ENCODE measurements at regions of chr10 and their contacts with region 1.

Region 1: DNA sequence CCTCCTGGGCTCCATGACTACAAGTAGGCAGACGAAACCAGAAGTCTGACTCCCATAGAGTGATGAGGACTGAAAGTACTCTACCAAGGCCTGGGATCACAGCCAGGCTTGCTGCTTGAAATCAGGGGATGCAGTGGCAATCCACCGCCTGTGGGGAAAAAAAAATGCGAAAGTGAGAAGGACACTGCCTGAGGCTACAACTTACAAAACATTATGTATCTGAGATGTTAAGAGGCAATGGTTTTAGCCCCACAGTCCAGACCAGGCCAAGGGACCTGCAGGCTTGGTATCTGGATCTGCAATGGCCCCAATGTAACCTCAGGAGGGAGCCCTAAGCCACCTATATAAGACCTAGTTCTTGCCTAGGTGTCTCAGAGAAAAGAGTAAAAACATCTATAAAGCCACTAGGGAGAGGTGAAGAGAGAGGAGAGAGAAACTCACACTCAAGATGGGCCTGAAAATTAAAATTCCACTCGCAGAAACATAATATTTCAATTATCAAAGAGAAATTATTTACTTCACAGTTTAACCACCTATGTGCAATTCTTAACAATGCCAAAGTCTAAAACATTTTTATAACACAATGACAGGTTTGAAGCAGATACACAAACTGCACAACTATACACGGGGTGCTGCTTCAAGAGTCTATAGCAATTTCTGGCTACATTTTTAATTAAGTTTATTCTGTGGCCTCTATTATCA is 13.9 kb downstream of the DNAJC1 start:
- DNase-seq: peak in 7 of 9 donors; percentile 14 to 52 (median 36)
- ATAC-seq: peak; percentile 89
- H3K4me3 ChIP-seq: no peak overlapping the region
- H3K4me3 Mint-ChIP-seq: no peak overlapping the region
- H3K27ac ChIP-seq: no peak overlapping the region
- H3K27ac Mint-ChIP-seq: peak overlapping the region in 2 of 9 donors; percentile 10 to 47
- H3K4me1 ChIP-seq: no peaks in the 10 kb centered on the region
- H3K4me1 Mint-ChIP-seq: peaks cover 0 to 14% (median 5%) of the 10 kb centered on the region in 7 donors
- H3K27me3 ChIP-seq: no peaks in the 10 kb centered on the region
- H3K27me3 Mint-ChIP-seq: no peaks in the 10 kb centered on the region

Region 2: GRCh38 chr10:22067099-22067498 is 77.5 kb after region 1 on chr10:
- CTCF ChIA-PET with region 1: no interaction called
- POLR2A ChIA-PET with region 1: no interaction called
- intact Hi-C with region 1: loop called in 1 of 2 experiments (anchors 1 kb)
- DNase-seq: no peak
- ATAC-seq: no peak
- H3K4me3 ChIP-seq: no peak overlapping the region
- H3K4me3 Mint-ChIP-seq: no peak overlapping the region
- H3K27ac ChIP-seq: no peak overlapping the region
- H3K27ac Mint-ChIP-seq: no peak overlapping the region
- H3K4me1 ChIP-seq: no peaks in the 10 kb centered on the region
- H3K4me1 Mint-ChIP-seq: no peaks in the 10 kb centered on the region
- H3K27me3 ChIP-seq: no peaks in the 10 kb centered on the region
- H3K27me3 Mint-ChIP-seq: peaks cover 0 to 8% (median 4%) of the 10 kb centered on the region in 5 donors

Region 3: DNA sequence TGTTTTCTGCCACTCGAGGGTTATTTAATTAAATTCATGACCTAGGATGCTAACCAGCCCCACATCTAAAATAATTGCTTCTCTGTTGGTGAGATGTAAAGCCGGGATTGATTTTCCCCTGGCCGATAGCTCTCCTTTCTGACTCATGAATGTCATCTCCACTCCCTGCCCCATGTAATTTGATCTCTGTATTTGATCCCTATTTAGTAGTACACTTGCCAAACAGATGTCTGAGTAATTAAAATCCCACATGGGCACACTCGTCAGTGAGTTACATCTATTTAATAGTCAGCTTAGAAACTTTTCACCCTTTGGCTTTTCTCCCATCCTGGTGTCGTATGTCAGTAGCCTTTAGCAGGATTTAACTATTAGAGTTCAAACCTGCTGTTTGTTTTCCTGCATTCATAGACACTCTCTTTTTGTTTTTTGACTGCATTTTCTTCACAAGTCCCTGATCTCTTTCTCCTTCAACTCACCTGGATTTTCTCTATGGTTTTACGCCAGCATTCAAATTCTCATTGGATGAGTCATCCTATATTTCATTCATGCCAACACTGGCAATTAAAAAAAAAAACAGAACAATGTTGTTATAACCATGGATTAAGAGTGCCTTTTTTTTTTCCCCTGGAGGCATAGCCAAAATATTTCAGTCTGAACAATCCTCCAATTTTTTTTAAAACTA is 438.4 kb after region 1 on chr10:
- CTCF ChIA-PET with region 1: interaction called, 11 read pairs
- POLR2A ChIA-PET with region 1: no interaction called
- intact Hi-C with region 1: no loop called
- DNase-seq: no peak
- ATAC-seq: no peak
- H3K4me3 ChIP-seq: no peak overlapping the region
- H3K4me3 Mint-ChIP-seq: no peak overlapping the region
- H3K27ac ChIP-seq: no peak overlapping the region
- H3K27ac Mint-ChIP-seq: no peak overlapping the region
- H3K4me1 ChIP-seq: no peaks in the 10 kb centered on the region
- H3K4me1 Mint-ChIP-seq: peaks cover 0 to 9% (median 0%) of the 10 kb centered on the region in 7 donors
- H3K27me3 ChIP-seq: no peaks in the 10 kb centered on the region
- H3K27me3 Mint-ChIP-seq: peaks cover 4 to 57% (median 17%) of the 10 kb centered on the region in 5 donors

Region 4: DNA sequence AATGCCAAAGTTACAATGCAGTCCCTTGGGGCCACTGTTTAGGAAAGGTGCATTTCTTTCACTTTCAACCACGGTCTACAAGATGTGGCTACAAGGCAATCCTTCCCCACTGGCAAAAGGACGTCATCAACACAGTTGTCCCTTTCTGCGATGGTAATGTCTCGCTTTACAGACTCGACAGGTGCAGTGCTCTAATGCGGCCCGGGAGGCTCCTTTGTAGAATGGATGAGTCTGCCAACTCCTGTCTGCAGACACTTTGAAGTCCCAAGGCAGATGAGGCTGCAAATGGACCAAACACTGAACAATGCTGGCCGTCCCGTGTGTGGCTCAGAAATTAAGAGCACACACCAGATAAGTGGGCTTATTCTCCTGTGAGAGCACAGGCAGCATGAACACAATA is 591.1 kb after region 1 on chr10:
- CTCF ChIA-PET with region 1: interaction called, 14 read pairs
- POLR2A ChIA-PET with region 1: no interaction called
- intact Hi-C with region 1: loop called (anchors 2 to 5 kb)
- DNase-seq: no peak
- ATAC-seq: no peak
- H3K4me3 ChIP-seq: no peak overlapping the region
- H3K4me3 Mint-ChIP-seq: no peak overlapping the region
- H3K27ac ChIP-seq: no peak overlapping the region
- H3K27ac Mint-ChIP-seq: peak overlapping the region in 5 of 9 donors; percentile 28 to 71 (median 46)
- H3K4me1 ChIP-seq: no peaks in the 10 kb centered on the region
- H3K4me1 Mint-ChIP-seq: peaks cover 21 to 72% (median 56%) of the 10 kb centered on the region in 7 donors
- H3K27me3 ChIP-seq: no peaks in the 10 kb centered on the region
- H3K27me3 Mint-ChIP-seq: no peaks in the 10 kb centered on the region

Region 5: GRCh38 chr10:23158370-23158769 is 1168.8 kb after region 1 on chr10:
- CTCF ChIA-PET with region 1: interaction called, 10 read pairs
- POLR2A ChIA-PET with region 1: no interaction called
- intact Hi-C with region 1: loop called in 1 of 2 experiments (anchors 1 kb)
- DNase-seq: peak in 7 of 9 donors; percentile 10 to 37 (median 30)
- ATAC-seq: peak; percentile 63
- H3K4me3 ChIP-seq: no peak overlapping the region
- H3K4me3 Mint-ChIP-seq: peak overlapping the region in 2 of 10 donors; percentile 24 to 30
- H3K27ac ChIP-seq: no peak overlapping the region
- H3K27ac Mint-ChIP-seq: no peak overlapping the region
- H3K4me1 ChIP-seq: no peaks in the 10 kb centered on the region
- H3K4me1 Mint-ChIP-seq: peaks cover 0 to 22% (median 0%) of the 10 kb centered on the region in 7 donors
- H3K27me3 ChIP-seq: no peaks in the 10 kb centered on the region
- H3K27me3 Mint-ChIP-seq: peaks cover 16 to 44% (median 34%) of the 10 kb centered on the region in 5 donors

Region 6: GRCh38 chr10:23702977-23703414 is 1713.4 kb after region 1 on chr10:
- CTCF ChIA-PET with region 1: no interaction called
- POLR2A ChIA-PET with region 1: no interaction called
- intact Hi-C with region 1: loop called in 1 of 2 experiments (anchors 5 kb)
- DNase-seq: peak in 7 of 9 donors; percentile 39 to 68 (median 61)
- ATAC-seq: peak; percentile 78
- H3K4me3 ChIP-seq: no peak overlapping the region
- H3K4me3 Mint-ChIP-seq: peak overlapping the region in 8 of 10 donors; percentile 7 to 62 (median 50)
- H3K27ac ChIP-seq: no peak overlapping the region
- H3K27ac Mint-ChIP-seq: peak overlapping the region in 1 of 9 donors; percentile 47
- H3K4me1 ChIP-seq: no peaks in the 10 kb centered on the region
- H3K4me1 Mint-ChIP-seq: peaks cover 3 to 15% (median 12%) of the 10 kb centered on the region in 7 donors
- H3K27me3 ChIP-seq: peaks cover 0 to 4% of the 10 kb centered on the region in 2 donors
- H3K27me3 Mint-ChIP-seq: peaks cover 22 to 40% (median 26%) of the 10 kb centered on the region in 5 donors

Measured in naive thymus-derived CD4-positive, alpha-beta T cell (primary cell).